ENCODE measurements at regions of chr12 and their contacts with region 1.

Region 1: GRCh38 chr12:69688496-69689427 is 10.3 kb downstream of the BEST3 start:
- DNase-seq: peak; percentile 59 to 86
- H3K4me3 ChIP-seq: peak overlapping the region in 1 of 2 donors; percentile 21
- H3K27ac ChIP-seq: peak overlapping the region; percentile 41 to 72
- H3K4me1 ChIP-seq: peaks cover 4 to 10% of the 10 kb centered on the region in 2 donors
- H3K27me3 ChIP-seq: no peaks in the 10 kb centered on the region
- CTCF ChIP-seq: no peak

Region 2: GRCh38 chr12:69738351-69739286 is 49.9 kb after region 1 on chr12 and contains the start of gene RAB3IP:
- intact Hi-C with region 1: loop called (anchors 5 kb)
- DNase-seq: peak; percentile 35 to 87
- H3K4me3 ChIP-seq: peak within 1 kb of the TSS; percentile 92 to 95
- H3K27ac ChIP-seq: peak within 1 kb of the TSS; percentile 15 to 53
- H3K4me1 ChIP-seq: peaks cover 0 to 7% of the 10 kb centered on the region in 2 donors
- H3K27me3 ChIP-seq: no peaks in the 10 kb centered on the region
- CTCF ChIP-seq: peak; percentile 25 to 63 (median 51)
- total RNA-seq, gene RAB3IP: 17.2 TPM

Region 3: DNA sequence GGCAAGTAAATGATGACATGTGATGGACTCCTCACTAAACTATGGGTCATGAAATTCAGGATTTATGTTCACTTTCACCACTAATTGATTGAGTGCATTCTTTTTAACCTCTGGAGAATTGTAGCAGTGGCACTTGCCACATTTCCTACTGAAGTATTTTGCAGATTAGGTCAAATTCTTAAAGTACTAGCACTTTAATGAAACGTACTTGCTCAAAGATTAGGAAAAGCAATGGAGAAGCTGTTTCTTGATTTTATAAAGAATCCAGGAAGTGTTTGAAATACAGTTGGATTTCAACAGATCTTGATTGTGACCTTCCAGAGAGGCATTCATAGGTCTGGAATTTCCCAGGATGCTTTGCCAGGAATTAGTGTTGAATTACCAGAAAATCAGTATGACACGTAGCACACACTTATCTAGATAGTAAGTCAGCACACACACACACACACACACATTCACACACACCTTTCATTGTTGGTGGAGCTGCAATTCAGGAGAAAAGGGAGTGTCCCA is 298.9 kb after region 1 on chr12:
- intact Hi-C with region 1: no loop called
- DNase-seq: peak in 1 of 2 donors; percentile 78
- H3K4me3 ChIP-seq: peak overlapping the region; percentile 43 to 44
- H3K27ac ChIP-seq: peak overlapping the region; percentile 72 to 79
- H3K4me1 ChIP-seq: peaks cover 3 to 12% of the 10 kb centered on the region in 2 donors
- H3K27me3 ChIP-seq: no peaks in the 10 kb centered on the region
- CTCF ChIP-seq: no peak